HepG2 (cell line): ENCODE measurements at regions of chr16 and their contacts with region 1.

Region 1: GRCh38 chr16:4766874-4767628 is at the start of gene ZNF500:
- DNase-seq: peak; percentile 93
- ATAC-seq: peak; percentile 85
- H3K4me3 ChIP-seq: peak within 1 kb of the TSS; percentile 91 to 92 (median 91)
- H3K27ac ChIP-seq: peak within 1 kb of the TSS; percentile 78
- H3K4me1 ChIP-seq: peaks cover 46% of the 10 kb centered on the region
- H3K27me3 ChIP-seq: no peaks in the 10 kb centered on the region; a peak in 1 of 5 replicates
- CTCF ChIP-seq: no peak; the same call in 1 of the 2 replicates
- EP300 ChIP-seq: no peak
- POLR2A ChIP-seq: peak; percentile 35 to 69
- RAD21 ChIP-seq: 0 out of 2 replicates have a peak, but pooled peaks have one; percentile 15
- total RNA-seq, gene ZNF500: 8.1 and 12.2 TPM in 2 replicates

Region 2: DNA sequence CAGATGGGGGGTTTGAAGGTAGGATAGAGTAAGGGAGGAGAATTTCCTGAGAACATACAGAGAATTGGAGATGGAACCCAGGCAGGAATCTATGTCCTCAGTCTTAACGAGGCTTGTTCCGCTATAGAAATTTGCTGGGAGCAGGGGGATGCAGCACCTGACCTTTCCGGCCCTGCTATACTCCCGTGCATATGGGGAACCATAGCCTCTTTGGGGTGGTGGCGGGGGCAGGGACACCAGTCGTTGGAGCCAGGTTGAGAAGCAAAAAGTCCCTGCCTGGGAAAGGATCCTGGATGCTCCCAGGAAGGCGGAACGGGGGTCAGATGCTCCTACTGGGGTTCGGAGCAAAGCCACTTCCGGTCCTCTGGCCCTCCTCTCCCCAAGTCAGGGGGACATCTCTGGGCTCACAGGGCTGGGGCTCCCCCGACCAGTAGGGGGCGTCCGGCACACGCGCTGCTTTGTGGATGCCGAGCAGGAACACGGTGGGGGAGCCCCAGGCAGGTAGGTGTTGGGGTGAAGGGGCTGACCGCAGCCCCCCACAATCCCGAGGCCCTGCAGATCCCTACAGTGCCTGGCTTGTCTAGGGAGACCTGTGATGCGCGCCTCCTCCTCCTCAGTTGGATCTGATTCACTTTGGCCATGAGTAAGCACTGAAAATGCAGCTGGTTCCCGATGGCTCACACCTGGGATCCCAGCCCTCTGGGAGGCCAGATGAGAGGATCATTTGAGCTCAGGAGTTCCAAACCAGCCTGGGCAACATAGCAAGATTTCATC is 478.7 kb before region 1 on chr16:
- CTCF ChIA-PET with region 1: no interaction called
- POLR2A ChIA-PET with region 1: no interaction called
- in situ Hi-C with region 1: no loop called
- intact Hi-C with region 1: no loop called
- DNase-seq: peak; percentile 55
- ATAC-seq: peak; percentile 77
- H3K4me3 ChIP-seq: peak overlapping the region; percentile 7 to 55 (median 21); a peak in 4 of 6 replicates
- H3K27ac ChIP-seq: no peak overlapping the region
- H3K4me1 ChIP-seq: peaks cover 65% of the 10 kb centered on the region
- H3K27me3 ChIP-seq: peaks cover 0 to 14% of the 10 kb centered on the region in 2 experiments; a peak in 4 of 5 replicates
- CTCF ChIP-seq: peak; percentile 97
- EP300 ChIP-seq: no peak
- POLR2A ChIP-seq: no peak
- RAD21 ChIP-seq: peak; percentile 88

Region 3: DNA sequence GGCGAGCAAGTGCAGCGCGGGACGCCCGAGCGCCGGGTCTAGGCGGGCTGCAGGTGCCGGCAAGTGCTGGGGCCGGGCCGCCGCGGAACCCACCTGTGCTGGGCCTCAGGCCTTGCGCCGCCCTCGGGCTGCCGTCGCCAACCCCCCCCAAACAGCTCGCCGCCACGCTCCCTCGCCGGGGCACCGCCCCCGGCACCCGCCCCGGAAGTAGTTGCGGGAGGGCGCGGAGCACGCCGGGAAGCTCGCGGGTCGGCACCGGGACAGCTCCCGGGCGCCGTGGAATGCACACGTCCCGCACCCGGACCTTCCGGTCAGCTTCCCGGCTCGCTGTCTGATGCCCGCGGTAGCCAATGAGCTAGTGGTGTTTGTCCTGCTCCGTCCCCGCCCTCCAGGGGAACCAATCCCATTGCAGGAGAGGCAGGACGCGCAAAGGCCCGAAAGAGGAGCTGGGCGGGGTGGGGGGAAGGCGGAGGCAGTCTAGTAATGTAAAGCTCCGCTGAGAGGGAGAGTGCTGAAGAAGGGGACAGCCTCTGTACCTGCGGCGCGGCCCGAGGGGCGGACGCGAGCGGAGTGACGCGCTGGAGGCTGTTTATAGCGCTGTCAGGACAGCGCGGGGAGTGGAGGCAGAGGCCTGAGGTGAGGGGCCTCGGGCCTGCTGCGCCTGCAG is 32.9 kb before region 1 on chr16 and contains the starts of genes ANKS3 and DNAAF8:
- CTCF ChIA-PET with region 1: no interaction called
- POLR2A ChIA-PET with region 1: interaction called, 40 read pairs
- in situ Hi-C with region 1: no loop called
- intact Hi-C with region 1: no loop called
- DNase-seq: peak; percentile 96
- ATAC-seq: peak; percentile 96
- H3K4me3 ChIP-seq: peak within 1 kb of the TSS; percentile 98 to 100 (median 100)
- H3K27ac ChIP-seq: peak within 1 kb of the TSS; percentile 80
- H3K4me1 ChIP-seq: peaks cover 20% of the 10 kb centered on the region
- H3K27me3 ChIP-seq: no peaks in the 10 kb centered on the region; a peak in 2 of 5 replicates
- CTCF ChIP-seq: peak; percentile 12; the same call in 1 of the 2 replicates
- EP300 ChIP-seq: no peak
- POLR2A ChIP-seq: peak; percentile 46 to 68
- RAD21 ChIP-seq: peak; percentile 48; the same call in 1 of the 2 replicates
- total RNA-seq, gene ANKS3: 6.6 and 15.9 TPM in 2 replicates
- total RNA-seq, gene DNAAF8: 0.38 and 0.44 TPM in 2 replicates

Region 4: DNA sequence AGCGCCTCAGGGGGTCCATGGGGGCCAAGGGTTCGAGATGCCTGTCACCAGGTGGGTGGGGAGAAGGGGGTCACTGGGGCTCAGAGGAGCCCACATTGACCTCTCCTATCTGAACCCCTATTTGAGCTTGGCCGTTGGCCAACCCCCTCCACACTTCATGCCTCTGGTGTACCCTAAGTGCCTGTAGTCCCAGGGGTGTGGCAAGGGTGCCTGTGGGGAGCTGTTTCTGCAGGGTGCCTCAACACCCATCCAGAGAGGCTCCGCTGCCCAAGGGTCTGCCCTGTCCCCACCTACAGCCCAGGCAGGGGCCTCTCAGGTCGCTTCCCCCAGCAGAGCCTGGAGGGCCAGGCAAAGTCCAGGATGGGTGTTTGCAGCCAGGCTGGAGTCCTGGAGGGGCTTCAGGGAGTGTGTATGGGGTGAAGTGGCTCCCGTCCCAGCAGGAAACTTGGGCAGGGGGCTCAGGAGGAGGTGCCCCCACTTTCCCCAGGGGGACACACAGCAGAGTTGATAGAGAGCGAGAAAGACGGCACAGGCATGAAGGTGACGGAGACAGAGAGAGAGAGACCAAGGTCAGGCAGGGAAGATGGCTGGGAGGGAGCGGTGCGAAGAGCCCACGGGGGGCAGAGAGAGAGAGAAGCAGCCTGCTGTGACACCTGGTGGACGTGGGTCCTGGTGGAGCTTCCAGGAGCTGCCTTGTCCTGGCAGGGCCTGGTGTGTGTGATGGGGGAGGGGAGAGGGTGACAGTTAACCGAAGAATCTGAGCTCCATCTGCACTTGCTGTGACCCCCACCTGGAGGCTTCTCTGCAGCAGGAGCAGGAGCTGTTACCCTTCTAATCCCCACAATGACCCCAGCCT is 20.8 kb after region 1 on chr16 and contains the start of gene SEPTIN12:
- CTCF ChIA-PET with region 1: no interaction called
- POLR2A ChIA-PET with region 1: interaction called, 17 read pairs
- in situ Hi-C with region 1: no loop called
- intact Hi-C with region 1: no loop called
- DNase-seq: no peak
- ATAC-seq: peak; percentile 69
- H3K4me3 ChIP-seq: peak within 1 kb of the TSS; percentile 23 to 67 (median 43)
- H3K27ac ChIP-seq: peak within 1 kb of the TSS; percentile 36
- H3K4me1 ChIP-seq: peaks cover 85% of the 10 kb centered on the region
- H3K27me3 ChIP-seq: no peaks in the 10 kb centered on the region; a peak in 1 of 5 replicates
- CTCF ChIP-seq: no peak; the same call in 1 of the 2 replicates
- EP300 ChIP-seq: no peak
- POLR2A ChIP-seq: no peak
- RAD21 ChIP-seq: no peak
- total RNA-seq, gene SEPTIN12: 0.22 TPM in 1 of 2 replicates, not detected in the other

Region 5: GRCh38 chr16:4802659-4803287 is 35.7 kb after region 1 on chr16:
- CTCF ChIA-PET with region 1: no interaction called
- POLR2A ChIA-PET with region 1: interaction called, 12 read pairs
- in situ Hi-C with region 1: no loop called
- intact Hi-C with region 1: loop called (anchors 2 kb)
- DNase-seq: peak; percentile 87
- ATAC-seq: peak; percentile 92
- H3K4me3 ChIP-seq: peak overlapping the region; percentile 88 to 90 (median 90)
- H3K27ac ChIP-seq: peak overlapping the region; percentile 83
- H3K4me1 ChIP-seq: peaks cover 24% of the 10 kb centered on the region
- H3K27me3 ChIP-seq: no peaks in the 10 kb centered on the region
- CTCF ChIP-seq: no peak
- EP300 ChIP-seq: no peak
- POLR2A ChIP-seq: peak in 1 of 2 experiments; percentile 42; a peak in 1 of 4 replicates
- RAD21 ChIP-seq: peak; percentile 41; the same call in 1 of the 2 replicates

Region 6: DNA sequence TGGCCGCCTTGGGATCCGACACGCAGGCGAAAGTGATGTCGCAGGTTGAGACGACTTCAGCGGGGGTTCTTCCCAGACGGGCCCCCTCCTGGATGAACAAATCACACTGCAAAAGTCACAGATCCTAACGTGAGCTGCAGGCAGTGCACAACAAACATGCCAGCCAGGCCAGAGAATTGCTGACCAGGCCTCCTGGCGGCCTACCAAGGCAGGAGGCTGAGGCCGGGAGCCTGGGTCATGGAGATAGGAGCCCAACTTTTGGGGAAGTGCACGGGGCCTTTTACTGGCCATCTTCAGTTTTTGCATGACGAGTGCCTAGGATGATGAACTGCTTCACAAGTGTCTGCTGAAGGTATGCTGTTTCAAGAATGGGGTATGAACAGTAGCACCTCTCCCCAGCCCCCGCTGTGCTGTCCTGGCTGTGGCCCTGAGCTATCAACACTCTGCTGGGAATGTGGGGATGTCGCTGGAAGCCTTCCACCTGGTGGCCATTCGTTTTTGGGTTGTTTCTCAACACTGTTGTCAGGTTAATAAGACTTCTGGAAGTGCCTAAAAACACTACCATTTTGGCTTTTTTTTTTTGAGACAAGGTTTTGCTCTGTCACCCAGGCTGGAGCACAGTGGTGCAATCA is 47.6 kb after region 1 on chr16:
- CTCF ChIA-PET with region 1: no interaction called
- POLR2A ChIA-PET with region 1: no interaction called
- in situ Hi-C with region 1: no loop called
- intact Hi-C with region 1: loop called (anchors 5 kb)
- DNase-seq: no peak
- ATAC-seq: peak; percentile 22; the same call in 1 of the 3 replicates
- H3K4me3 ChIP-seq: no peak overlapping the region
- H3K27ac ChIP-seq: no peak overlapping the region
- H3K4me1 ChIP-seq: peaks cover 17% of the 10 kb centered on the region
- H3K27me3 ChIP-seq: no peaks in the 10 kb centered on the region
- CTCF ChIP-seq: 0 out of 2 replicates have a peak, but pooled peaks have one; percentile 14
- EP300 ChIP-seq: no peak
- POLR2A ChIP-seq: no peak
- RAD21 ChIP-seq: no peak

Region 7: DNA sequence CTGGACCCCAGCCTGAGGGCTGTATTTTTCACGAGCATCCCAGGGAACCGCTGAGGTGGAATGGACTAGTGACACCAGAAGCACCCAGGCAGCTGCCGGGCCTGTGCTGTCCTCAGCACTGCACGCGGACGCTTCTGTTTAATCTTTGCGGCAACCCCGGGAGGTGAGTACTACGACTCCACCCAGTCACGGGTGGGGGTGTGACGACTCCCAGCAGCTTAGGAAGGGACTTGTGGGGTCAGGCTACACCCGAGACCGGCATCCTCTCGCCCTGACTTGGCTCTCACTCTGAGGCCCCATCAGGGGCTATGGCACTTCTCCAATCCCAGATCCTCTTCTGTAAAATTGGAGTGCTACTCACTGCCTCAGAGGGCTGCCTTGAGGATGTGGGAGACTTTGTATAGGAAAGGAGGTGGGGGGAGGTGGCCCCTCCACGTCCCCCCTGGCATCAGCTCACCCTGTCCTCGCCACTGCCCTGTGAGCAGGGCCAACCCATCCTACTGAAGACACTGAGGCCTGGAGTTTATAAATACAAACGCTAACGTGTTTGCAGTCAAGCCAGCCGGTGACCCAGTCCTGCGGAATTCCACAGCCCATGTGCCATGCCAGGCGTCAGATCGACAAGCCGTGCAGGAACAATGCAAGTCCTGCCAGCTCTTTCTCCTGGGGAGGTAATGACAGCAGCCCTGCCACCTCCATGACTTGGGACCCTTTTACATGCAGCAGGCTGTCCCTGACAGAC is 125.5 kb after region 1 on chr16:
- CTCF ChIA-PET with region 1: no interaction called
- POLR2A ChIA-PET with region 1: no interaction called
- in situ Hi-C with region 1: no loop called
- intact Hi-C with region 1: no loop called
- DNase-seq: no peak
- ATAC-seq: no peak
- H3K4me3 ChIP-seq: no peak overlapping the region
- H3K27ac ChIP-seq: no peak overlapping the region
- H3K4me1 ChIP-seq: no peaks in the 10 kb centered on the region
- H3K27me3 ChIP-seq: no peaks in the 10 kb centered on the region
- CTCF ChIP-seq: no peak
- EP300 ChIP-seq: no peak
- POLR2A ChIP-seq: no peak
- RAD21 ChIP-seq: no peak